Activated naive CD4-positive, alpha-beta T cell treated with anti-CD3 and anti-CD28 coated beads for 36 hours (primary cell): ENCODE measurements at regions of chr14 and their contacts with region 1.

Region 1: DNA sequence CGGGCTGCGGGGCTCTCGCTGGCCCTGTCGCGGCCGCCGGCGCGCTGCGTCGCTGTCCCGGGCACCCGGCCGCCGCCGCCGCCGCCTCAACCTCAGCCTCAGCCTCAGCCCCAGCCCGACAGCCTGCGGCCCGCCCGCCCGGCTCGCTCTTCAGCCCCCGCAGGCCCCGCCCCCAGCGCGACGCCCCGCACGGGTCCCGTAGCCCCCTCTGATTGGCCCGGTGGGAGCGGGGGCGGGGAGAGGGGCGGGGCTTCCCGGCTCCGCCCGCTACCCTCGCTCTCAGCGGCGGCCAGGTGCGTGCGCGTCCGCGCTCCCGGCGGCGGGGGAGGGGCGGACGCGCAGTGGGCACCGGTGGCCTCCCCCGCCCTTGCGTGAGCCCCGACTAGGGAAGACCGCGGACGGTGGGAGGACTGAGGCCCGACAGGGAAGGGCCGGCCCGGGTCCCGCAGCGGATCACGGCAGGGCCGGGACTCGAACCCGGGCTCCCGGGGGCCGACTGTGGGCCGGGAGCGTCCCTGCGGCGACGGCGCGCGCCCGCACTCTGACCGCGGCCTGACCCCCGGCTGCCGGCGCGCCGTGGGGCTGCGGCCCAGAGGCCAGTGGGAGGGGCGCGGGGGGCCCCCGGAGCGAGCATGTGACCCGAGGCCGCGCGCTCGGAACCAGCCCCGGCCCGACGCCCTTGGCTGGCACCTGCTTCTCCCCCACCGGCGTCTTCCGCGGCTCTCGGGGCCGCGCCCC is at the start of gene PPP1R13B:
- DNase-seq: peak; percentile 93
- H3K4me3 Mint-ChIP-seq: peak within 1 kb of the TSS; percentile 86
- H3K27ac Mint-ChIP-seq: no peak within 1 kb of the TSS
- H3K4me1 Mint-ChIP-seq: peaks cover 15% of the 10 kb centered on the region
- H3K27me3 Mint-ChIP-seq: no peaks in the 10 kb centered on the region
- total RNA-seq, gene PPP1R13B: 8.0 to 8.6 TPM

Region 2: DNA sequence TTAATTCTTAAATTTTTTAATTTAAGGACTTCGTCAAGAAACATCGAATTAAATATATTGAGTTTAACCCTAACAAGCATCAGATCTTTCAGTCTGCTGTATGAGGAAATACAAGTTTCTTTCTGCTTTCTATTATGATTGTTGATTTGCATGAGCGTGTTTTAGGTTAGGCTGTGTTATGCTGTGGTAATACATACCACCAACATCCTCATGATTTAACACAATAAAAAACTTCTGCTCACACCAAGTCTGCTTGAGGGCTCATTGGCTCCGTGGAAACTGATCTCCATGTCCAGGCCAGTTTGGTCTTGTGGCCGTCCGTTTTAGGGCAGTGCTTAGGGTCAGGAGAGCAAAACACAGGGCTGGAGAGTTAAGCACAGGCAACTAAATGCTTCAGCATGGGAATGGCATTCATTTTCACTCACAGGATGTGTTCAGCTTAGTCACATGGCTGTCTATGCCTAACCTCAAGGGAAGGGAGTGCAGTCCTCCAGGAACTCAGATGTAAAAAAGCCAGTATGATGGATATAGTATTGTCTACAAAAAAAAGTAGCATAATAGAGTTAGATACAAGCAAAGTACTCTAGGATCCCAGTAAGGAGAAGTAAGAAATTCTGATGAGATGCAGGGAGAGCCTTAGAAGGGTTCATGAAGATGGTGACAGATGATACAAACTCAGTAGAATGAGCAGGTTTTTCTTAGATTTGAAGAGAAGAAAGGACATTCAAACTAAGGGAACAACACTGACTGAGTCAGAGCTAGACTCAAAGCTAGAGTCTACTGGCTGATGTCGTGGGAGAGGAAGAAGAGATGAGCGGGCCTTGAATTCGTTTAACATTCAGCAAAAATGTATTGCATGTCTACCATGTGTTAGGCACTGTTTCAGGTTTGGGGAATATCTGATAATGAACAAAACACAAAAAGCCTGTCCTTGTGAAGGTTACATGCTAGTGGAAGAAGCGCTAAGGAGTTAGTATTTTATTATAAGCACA is 446.1 kb before region 1 on chr14:
- CTCF ChIA-PET with region 1: no interaction called
- intact Hi-C with region 1: loop called (anchors 5 kb)
- DNase-seq: peak; percentile 36
- H3K4me3 Mint-ChIP-seq: no peak overlapping the region
- H3K27ac Mint-ChIP-seq: peak overlapping the region; percentile 59
- H3K4me1 Mint-ChIP-seq: peaks cover 65% of the 10 kb centered on the region
- H3K27me3 Mint-ChIP-seq: no peaks in the 10 kb centered on the region

Region 3: DNA sequence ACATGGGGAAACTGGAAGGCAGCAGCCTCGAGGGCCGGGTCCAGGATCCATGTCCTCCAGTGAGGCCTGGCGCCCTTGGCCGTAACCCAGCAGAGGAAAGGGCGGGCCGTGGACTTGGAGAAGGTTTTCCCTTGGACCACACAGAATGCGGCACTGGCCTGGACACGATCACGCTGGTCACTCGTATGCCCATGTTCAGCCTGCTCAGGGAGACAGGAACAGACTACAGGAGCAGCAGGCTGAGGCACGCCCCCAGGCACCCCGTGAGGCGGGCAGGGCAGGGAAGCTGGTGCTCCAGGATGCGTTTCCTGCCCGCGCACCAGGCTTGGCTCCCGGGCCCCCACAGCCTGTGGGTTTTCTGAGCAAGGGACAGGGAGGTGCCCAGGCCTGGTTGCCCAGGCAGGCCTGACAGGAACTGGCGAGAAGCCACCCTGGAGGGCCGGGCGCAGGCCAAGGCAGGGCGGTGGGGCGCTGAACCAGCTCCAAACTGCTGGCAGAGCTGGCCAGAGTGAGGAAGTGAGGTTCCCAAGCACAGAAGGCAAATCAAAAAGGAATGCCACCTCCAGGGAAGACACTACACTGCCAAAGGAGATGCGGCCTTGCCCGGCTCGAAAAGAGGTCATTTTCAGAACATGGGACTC is 135.6 kb before region 1 on chr14:
- CTCF ChIA-PET with region 1: no interaction called
- intact Hi-C with region 1: no loop called
- DNase-seq: no peak
- H3K4me3 Mint-ChIP-seq: no peak overlapping the region
- H3K27ac Mint-ChIP-seq: no peak overlapping the region
- H3K4me1 Mint-ChIP-seq: peaks cover 24% of the 10 kb centered on the region
- H3K27me3 Mint-ChIP-seq: no peaks in the 10 kb centered on the region